ENCODE measurements at regions of chr6 and their contacts with region 1.

Region 1: DNA sequence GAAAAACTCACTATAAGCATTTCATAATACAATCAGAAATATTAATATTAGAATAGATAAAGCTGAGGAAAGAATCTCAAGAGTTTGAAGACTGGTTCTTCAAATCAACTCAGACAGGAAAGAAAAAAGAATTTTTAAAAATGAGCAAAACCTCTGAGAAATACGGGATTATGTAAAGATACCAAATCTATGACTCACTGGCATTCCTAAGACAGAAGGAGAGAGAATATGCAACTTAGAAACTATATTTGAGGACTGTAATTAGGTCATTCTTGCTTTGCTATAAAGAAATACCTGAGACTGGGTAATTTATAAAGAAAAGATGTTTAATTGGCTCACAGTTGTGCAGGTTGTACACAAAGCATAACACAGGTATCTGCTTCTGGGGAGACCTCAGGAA is 665.1 kb downstream of the RNF144B start:
- DNase-seq: no peak
- H3K4me3 ChIP-seq: no peak overlapping the region
- H3K4me3 Mint-ChIP-seq: no peak overlapping the region
- H3K27ac ChIP-seq: no peak overlapping the region
- H3K27ac Mint-ChIP-seq: no peak overlapping the region
- H3K4me1 ChIP-seq: no peaks in the 10 kb centered on the region
- H3K4me1 Mint-ChIP-seq: no peaks in the 10 kb centered on the region
- H3K27me3 ChIP-seq: no peaks in the 10 kb centered on the region
- H3K27me3 Mint-ChIP-seq: peaks cover 0 to 1% of the 10 kb centered on the region in 2 donors

Region 2: DNA sequence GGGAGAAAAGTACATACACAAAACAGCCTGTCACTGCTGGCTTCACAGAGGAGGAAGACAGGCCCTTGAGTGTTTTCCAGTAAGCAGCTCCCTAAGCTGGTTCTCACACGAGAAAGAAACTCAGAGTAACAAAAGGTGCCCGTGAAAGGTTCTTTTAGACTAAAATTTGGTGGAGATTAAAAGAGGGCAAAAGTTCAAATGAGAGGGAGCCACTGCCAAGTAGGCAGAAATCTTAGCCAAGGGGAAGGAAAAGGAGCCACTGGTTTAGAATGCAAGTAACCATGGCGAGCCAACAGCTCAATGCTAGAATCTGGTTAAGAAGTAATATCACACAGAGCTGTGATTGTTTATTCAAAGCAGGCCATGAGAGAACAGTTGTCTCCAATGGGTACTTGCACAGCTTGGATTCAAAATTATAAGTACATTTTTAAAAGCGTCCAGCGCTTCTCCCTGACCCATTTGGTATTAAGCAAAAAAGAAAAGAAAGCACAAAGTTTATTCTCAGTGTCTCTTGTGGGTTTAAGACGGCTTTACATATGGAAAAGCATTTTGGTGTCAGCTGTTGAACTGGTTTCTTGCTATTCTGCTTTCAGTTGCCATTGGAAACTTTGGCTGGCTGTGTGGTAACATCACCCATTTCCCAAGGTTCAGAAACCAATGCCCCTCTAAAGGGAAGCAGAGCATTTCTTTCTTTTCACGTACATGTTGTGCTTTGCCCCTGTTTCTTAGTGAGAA is 16.6 kb before region 1 on chr6:
- CTCF ChIA-PET with region 1: no interaction called
- POLR2A ChIA-PET with region 1: no interaction called
- intact Hi-C with region 1: loop called (anchors 1 kb)
- DNase-seq: no peak
- H3K4me3 ChIP-seq: no peak overlapping the region
- H3K4me3 Mint-ChIP-seq: no peak overlapping the region
- H3K27ac ChIP-seq: no peak overlapping the region
- H3K27ac Mint-ChIP-seq: no peak overlapping the region
- H3K4me1 ChIP-seq: no peaks in the 10 kb centered on the region
- H3K4me1 Mint-ChIP-seq: no peaks in the 10 kb centered on the region
- H3K27me3 ChIP-seq: no peaks in the 10 kb centered on the region
- H3K27me3 Mint-ChIP-seq: no peaks in the 10 kb centered on the region

Region 3: GRCh38 chr6:19070520-19070919 is 18.3 kb after region 1 on chr6:
- CTCF ChIA-PET with region 1: no interaction called
- POLR2A ChIA-PET with region 1: no interaction called
- intact Hi-C with region 1: no loop called
- DNase-seq: no peak
- H3K4me3 ChIP-seq: no peak overlapping the region
- H3K4me3 Mint-ChIP-seq: no peak overlapping the region
- H3K27ac ChIP-seq: no peak overlapping the region
- H3K27ac Mint-ChIP-seq: no peak overlapping the region
- H3K4me1 ChIP-seq: no peaks in the 10 kb centered on the region
- H3K4me1 Mint-ChIP-seq: no peaks in the 10 kb centered on the region
- H3K27me3 ChIP-seq: no peaks in the 10 kb centered on the region
- H3K27me3 Mint-ChIP-seq: no peaks in the 10 kb centered on the region

Region 4: GRCh38 chr6:19368509-19368908 is 316.3 kb after region 1 on chr6:
- CTCF ChIA-PET with region 1: no interaction called
- POLR2A ChIA-PET with region 1: no interaction called
- intact Hi-C with region 1: no loop called
- DNase-seq: no peak
- H3K4me3 ChIP-seq: no peak overlapping the region
- H3K4me3 Mint-ChIP-seq: no peak overlapping the region
- H3K27ac ChIP-seq: no peak overlapping the region
- H3K27ac Mint-ChIP-seq: no peak overlapping the region
- H3K4me1 ChIP-seq: no peaks in the 10 kb centered on the region
- H3K4me1 Mint-ChIP-seq: no peaks in the 10 kb centered on the region
- H3K27me3 ChIP-seq: no peaks in the 10 kb centered on the region
- H3K27me3 Mint-ChIP-seq: no peaks in the 10 kb centered on the region